PC-9 (cell line): ENCODE measurements at regions of chr16 and their contacts with region 1.

Region 1: DNA sequence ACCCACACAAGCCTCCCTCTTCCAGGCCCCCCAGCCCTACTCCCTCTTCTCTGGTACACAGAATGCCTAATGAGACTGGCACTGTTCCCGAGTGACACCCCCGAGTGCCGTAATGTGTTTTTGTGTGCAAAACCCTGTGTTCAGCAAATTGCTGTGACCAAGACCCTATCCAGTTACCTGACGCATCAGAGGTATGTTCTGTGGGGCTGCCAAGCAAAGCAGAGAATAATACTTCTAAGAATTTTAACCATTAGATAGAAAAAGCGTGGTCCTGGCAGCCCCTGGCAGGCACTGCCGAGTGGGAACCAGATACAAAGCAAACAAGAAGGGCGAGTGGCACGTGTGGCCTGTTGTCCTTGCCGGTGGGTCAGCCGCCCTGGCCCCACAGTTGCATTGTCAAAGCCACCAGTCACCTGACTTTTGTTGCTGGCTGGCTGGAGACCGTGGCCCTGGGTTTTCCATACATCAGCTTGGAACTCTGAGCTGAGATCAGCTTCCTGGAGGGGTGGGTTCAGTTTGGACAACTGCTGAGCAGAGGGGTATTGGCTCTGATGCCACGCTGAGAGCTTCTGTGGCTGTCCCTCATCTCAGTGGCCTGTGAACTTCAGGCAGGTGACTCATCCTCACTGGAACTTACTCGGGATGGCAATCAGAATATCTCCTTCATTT is 69.1 kb upstream of the BRD7 start:
- DNase-seq: no peak
- H3K4me3 ChIP-seq: no peak overlapping the region
- H3K27ac ChIP-seq: no peak overlapping the region
- H3K4me1 ChIP-seq: no peaks in the 10 kb centered on the region
- H3K27me3 ChIP-seq: 0 out of 2 replicates have a peak, but pooled peaks cover 3% of the 10 kb centered on the region
- CTCF ChIP-seq: no peak

Region 2: DNA sequence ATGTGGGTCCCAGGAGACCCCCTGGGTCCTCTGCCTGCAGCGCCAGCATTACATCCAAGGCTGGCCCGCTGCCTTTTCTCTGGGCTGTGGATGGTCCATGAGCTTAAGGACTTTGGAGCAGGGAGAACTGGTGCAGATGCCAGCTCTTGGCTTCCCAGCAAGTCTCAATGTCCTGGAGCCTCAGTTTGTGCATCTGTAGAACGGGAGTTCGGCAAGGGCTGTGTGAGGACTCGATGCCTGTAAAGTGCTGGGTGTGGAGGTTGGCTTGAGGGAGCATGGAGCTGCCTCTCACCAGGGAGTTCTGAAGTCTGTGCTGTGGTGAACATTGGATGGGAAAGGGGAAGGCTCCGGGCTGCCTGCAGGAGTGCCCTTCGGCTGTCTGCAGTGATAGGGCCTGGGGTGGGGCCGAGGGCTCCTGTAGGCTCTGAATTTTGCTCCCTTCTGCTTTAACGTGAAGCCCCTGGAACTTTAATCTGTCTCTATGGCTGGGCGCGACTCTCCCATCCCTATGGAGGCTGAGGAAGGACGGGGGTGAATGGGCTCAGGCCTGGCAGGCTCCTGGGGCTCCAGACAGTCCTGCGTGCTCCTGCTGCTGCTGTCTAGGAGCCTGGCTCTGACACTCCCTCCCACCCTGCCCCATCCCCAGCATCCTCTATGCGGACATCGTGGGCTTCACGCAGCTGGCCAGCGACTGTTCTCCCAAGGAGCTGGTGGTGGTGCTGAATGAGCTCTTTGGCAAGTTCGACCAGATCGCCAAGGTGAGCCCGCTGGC is 143.7 kb before region 1 on chr16:
- CTCF ChIA-PET with region 1: no interaction called
- POLR2A ChIA-PET with region 1: no interaction called
- intact Hi-C with region 1: no loop called
- DNase-seq: no peak
- H3K4me3 ChIP-seq: no peak overlapping the region
- H3K27ac ChIP-seq: no peak overlapping the region
- H3K4me1 ChIP-seq: no peaks in the 10 kb centered on the region
- H3K27me3 ChIP-seq: no peaks in the 10 kb centered on the region
- CTCF ChIP-seq: no peak

Region 3: GRCh38 chr16:50395763-50396710 is 41.9 kb before region 1 on chr16:
- CTCF ChIA-PET with region 1: no interaction called
- POLR2A ChIA-PET with region 1: interaction called, 11 read pairs
- intact Hi-C with region 1: no loop called
- DNase-seq: peak; percentile 37 to 69
- H3K4me3 ChIP-seq: peak overlapping the region; percentile 63
- H3K27ac ChIP-seq: peak overlapping the region; percentile 98
- H3K4me1 ChIP-seq: peaks cover 39% of the 10 kb centered on the region
- H3K27me3 ChIP-seq: no peaks in the 10 kb centered on the region
- CTCF ChIP-seq: no peak